ENCODE measurements at regions of chr6 and their contacts with region 1.

Region 1: DNA sequence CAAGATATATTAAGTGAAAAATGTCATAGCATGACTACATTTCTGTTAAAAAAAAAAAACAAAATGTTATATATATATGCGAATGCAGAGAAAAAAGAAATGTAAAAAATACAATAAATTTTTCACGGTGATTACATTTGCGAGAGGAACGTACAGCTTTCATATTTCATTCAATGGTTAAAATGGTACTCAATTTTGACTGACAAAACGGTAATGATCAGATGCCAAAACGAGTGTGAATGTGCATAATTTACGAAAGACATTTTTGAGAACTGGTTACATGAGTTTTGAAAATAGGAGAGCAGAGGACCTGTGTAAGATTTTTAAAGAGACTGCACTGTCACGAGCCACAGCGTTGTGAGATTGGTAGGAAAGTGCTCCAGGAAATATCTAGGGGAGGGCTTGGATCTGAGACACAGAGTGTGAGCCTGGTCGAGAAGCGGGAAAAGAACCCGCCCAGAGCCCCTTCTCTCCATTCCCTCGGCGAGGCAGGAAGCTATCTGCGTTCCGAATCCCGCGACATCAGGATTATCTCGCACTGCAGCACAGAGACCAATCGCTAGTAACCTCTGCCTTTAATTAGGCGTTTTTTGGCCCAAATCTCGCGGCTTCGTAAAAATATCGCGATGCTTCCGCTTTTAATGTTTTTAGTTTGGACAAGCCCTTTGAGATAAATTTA is 28.5 kb downstream of the TRIM27 start:
- DNase-seq: peak; percentile 98
- ATAC-seq: peak; percentile 79
- H3K4me3 Mint-ChIP-seq: peak overlapping the region; percentile 96
- H3K27ac Mint-ChIP-seq: peak overlapping the region; percentile 95
- H3K4me1 Mint-ChIP-seq: peaks cover 5% of the 10 kb centered on the region
- H3K27me3 Mint-ChIP-seq: peaks cover 2% of the 10 kb centered on the region
- CTCF ChIP-seq: no peak

Region 2: GRCh38 chr6:28880894-28881780 is 14.1 kb before region 1 on chr6:
- CTCF ChIA-PET with region 1: interaction called, 21 read pairs
- POLR2A ChIA-PET with region 1: interaction called, 27 read pairs
- intact Hi-C with region 1: no loop called
- DNase-seq: peak; percentile 82
- ATAC-seq: no peak
- H3K4me3 Mint-ChIP-seq: peak overlapping the region; percentile 81
- H3K27ac Mint-ChIP-seq: peak overlapping the region; percentile 77
- H3K4me1 Mint-ChIP-seq: peaks cover 45% of the 10 kb centered on the region
- H3K27me3 Mint-ChIP-seq: peaks cover 1% of the 10 kb centered on the region
- CTCF ChIP-seq: no peak

Region 3: GRCh38 chr6:28940858-28941680 is 45.8 kb after region 1 on chr6:
- CTCF ChIA-PET with region 1: interaction called, 3 read pairs
- POLR2A ChIA-PET with region 1: interaction called, 7 read pairs
- intact Hi-C with region 1: loop called (anchors 2 kb)
- DNase-seq: peak; percentile 89
- ATAC-seq: peak; percentile 69
- H3K4me3 Mint-ChIP-seq: peak overlapping the region; percentile 83
- H3K27ac Mint-ChIP-seq: peak overlapping the region; percentile 99
- H3K4me1 Mint-ChIP-seq: peaks cover 40% of the 10 kb centered on the region
- H3K27me3 Mint-ChIP-seq: peaks cover 2% of the 10 kb centered on the region
- CTCF ChIP-seq: no peak